Transverse colon (tissue), 4 donors: ENCODE measurements at regions of chr22 and their contacts with region 1.

Region 1: DNA sequence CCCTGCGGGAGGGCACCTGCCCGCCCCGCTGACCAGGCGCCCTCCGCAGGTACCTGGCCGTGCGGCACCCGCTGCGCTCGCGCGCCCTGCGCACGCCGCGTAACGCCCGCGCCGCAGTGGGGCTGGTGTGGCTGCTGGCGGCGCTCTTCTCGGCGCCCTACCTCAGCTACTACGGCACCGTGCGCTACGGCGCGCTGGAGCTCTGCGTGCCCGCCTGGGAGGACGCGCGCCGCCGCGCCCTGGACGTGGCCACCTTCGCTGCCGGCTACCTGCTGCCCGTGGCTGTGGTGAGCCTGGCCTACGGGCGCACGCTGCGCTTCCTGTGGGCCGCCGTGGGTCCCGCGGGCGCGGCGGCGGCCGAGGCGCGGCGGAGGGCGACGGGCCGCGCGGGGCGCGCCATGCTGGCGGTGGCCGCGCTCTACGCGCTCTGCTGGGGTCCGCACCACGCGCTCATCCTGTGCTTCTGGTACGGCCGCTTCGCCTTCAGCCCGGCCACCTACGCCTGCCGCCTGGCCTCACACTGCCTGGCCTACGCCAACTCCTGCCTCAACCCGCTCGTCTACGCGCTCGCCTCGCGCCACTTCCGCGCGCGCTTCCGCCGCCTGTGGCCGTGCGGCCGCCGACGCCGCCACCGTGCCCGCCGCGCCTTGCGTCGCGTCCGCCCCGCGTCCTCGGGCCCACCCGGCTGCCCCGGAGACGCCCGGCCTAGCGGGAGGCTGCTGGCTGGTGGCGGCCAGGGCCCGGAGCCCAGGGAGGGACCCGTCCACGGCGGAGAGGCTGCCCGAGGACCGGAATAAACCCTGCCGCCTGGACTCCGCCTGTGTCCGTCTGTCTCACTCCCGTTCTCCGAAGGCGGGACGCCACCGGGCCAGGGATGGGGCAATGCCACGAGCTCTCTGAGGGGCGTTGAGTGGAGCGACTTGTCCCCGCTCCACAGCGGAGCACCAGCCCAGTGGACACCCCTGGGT is 1.8 kb downstream of the GALR3 start:
- DNase-seq: no peak
- H3K4me3 ChIP-seq: peak overlapping the region in 3 of 4 donors; percentile 5 to 37 (median 33)
- H3K27ac ChIP-seq: no peak overlapping the region
- H3K4me1 ChIP-seq: peaks cover 0 to 7% (median 4%) of the 10 kb centered on the region in 4 donors
- H3K27me3 ChIP-seq: peaks cover 37% of the 10 kb centered on the region
- CTCF ChIP-seq: no peak
- EP300 ChIP-seq: no peak
- POLR2A ChIP-seq: no peak

Region 2: GRCh38 chr22:37109242-37109917 is 715.6 kb before region 1 on chr22 and contains the start of gene TMPRSS6:
- in situ Hi-C with region 1: no loop called
- intact Hi-C with region 1: no loop called
- DNase-seq: no peak
- H3K4me3 ChIP-seq: no peak within 1 kb of the TSS
- H3K27ac ChIP-seq: no peak within 1 kb of the TSS
- H3K4me1 ChIP-seq: no peaks in the 10 kb centered on the region
- H3K27me3 ChIP-seq: peaks cover under 1% of the 10 kb centered on the region
- CTCF ChIP-seq: no peak
- EP300 ChIP-seq: no peak
- POLR2A ChIP-seq: no peak
- total RNA-seq, gene TMPRSS6: 0.16 to 4.9 (median 0.41) TPM in 3 of 4 donors, not detected in the other

Region 3: GRCh38 chr22:37870273-37870672 is 45.3 kb after region 1 on chr22:
- in situ Hi-C with region 1: no loop called
- intact Hi-C with region 1: no loop called
- DNase-seq: no peak
- H3K4me3 ChIP-seq: no peak overlapping the region
- H3K27ac ChIP-seq: no peak overlapping the region
- H3K4me1 ChIP-seq: no peaks in the 10 kb centered on the region
- H3K27me3 ChIP-seq: no peaks in the 10 kb centered on the region
- CTCF ChIP-seq: no peak
- EP300 ChIP-seq: no peak
- POLR2A ChIP-seq: no peak

Region 4: DNA sequence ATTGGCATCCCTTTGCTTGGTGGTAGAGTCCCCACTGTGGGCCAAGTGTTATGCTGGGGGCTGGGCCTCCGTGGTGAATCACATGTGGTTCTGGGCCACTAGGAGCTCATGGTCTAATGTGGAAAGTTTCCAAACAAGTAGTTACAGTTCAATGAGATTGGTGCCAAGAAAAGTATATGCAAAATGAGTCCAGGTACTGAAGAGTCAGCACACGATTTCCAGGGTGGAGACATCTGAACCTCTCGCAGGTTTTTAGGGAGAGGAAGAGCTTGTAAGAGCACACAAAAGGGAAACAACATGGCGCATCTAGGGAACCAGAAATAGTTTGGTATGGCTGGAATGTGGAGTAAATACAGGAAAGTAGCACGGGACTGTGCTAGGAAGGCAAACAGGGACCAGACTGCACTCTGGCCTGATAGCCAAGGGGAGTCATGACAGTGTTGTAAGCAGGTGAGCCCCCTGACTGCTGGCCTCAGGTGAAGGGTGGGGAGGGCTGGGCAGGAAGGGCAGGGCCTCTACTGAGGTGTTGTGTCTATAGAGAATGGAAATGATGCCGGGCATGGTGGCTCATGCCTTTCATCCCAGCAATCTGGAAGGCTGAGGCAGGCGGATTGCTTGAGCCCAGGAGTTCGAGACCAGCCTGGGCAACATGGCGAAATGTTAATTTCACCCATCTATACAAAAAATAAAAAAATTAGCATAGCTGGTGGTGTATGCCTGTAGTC is 141.1 kb after region 1 on chr22:
- in situ Hi-C with region 1: loop called in 2 of 4 experiments (anchors 10 to 25 kb)
- intact Hi-C with region 1: no loop called
- DNase-seq: no peak
- H3K4me3 ChIP-seq: no peak overlapping the region
- H3K27ac ChIP-seq: no peak overlapping the region
- H3K4me1 ChIP-seq: peaks cover 0 to 5% (median 1%) of the 10 kb centered on the region in 4 donors
- H3K27me3 ChIP-seq: no peaks in the 10 kb centered on the region
- CTCF ChIP-seq: no peak
- EP300 ChIP-seq: no peak
- POLR2A ChIP-seq: no peak

Region 5: GRCh38 chr22:37999956-38000272 is 175.0 kb after region 1 on chr22:
- in situ Hi-C with region 1: no loop called
- intact Hi-C with region 1: no loop called
- DNase-seq: no peak
- H3K4me3 ChIP-seq: no peak overlapping the region
- H3K27ac ChIP-seq: peak overlapping the region in 2 of 4 donors; percentile 5 to 21
- H3K4me1 ChIP-seq: no peaks in the 10 kb centered on the region
- H3K27me3 ChIP-seq: no peaks in the 10 kb centered on the region
- CTCF ChIP-seq: no peak
- EP300 ChIP-seq: no peak
- POLR2A ChIP-seq: no peak